Right cardiac atrium (tissue), 5 donors: ENCODE measurements at regions of chr1 and their contacts with region 1.

Region 1: DNA sequence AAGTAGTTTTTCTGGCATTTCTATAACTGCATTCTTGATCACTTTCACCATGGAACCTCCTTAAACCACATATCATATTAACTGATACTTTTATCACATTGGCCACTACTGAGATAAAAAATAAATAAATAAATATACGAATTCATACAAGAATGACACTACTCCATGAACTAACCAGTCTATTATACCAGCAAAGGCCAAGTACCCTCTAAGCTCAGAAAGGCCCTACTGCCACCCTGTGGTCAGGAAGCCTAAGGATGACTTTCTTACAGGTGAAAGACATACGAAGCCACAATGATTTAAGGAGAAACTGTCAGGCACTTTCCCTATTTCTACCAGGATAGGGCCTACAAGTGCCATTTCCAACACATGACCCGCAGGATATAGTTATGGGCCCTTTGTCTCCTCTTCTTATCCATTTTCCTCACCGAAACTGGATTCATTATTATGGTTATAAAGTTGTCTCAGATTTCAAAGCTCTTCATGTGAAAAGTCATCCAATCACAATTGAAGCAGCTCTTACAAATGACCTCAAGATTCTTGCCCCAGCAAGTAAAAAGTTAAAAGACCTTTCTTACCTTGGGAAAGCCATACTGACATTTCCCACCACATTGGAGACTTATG is 23.9 kb downstream of the DNAJC8 start:
- DNase-seq: peak; percentile 23 to 71 (median 57)
- ATAC-seq: peak; percentile 83 to 87
- H3K4me3 ChIP-seq: no peak overlapping the region
- H3K27ac ChIP-seq: no peak overlapping the region
- H3K4me1 ChIP-seq: no peaks in the 10 kb centered on the region
- H3K27me3 ChIP-seq: no peaks in the 10 kb centered on the region

Region 2: GRCh38 chr1:28045777-28046176 is 163.2 kb before region 1 on chr1:
- intact Hi-C with region 1: no loop called
- DNase-seq: no peak
- ATAC-seq: no peak
- H3K4me3 ChIP-seq: no peak overlapping the region
- H3K27ac ChIP-seq: no peak overlapping the region
- H3K4me1 ChIP-seq: no peaks in the 10 kb centered on the region
- H3K27me3 ChIP-seq: no peaks in the 10 kb centered on the region

Region 3: DNA sequence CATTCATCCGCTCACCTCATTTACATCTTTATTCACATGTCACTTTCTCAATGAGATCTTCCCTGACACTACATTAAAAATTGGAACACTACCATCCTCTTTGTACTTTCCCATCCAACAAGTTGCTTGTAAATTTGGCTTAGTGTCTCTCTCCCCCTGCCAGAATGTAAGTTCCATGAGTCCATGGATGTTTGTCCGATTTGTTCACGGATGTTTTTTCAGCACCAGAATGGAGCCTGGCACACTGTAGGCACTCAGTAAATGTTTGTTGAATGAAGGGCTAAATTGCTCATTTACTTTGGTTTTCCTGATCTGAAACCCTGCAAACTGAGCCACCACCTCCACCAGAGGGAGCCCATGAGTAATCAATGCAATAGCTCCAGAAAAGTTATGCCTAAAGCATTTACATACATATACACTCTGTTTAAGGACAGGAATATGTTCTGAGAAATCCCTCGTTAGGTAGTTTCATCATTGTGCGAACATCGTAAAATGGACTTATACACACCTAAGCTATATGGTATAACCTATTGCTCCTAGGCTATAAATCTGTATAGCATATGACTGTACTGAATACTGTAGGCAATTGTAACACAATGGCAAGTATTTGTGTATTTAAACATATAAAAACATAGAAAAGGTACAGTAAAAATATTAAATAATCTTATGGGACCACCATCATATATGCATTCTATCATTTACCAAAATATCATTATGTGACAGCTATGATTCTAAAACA is 117.7 kb before region 1 on chr1:
- intact Hi-C with region 1: loop called in 2 of 4 experiments (anchors 5 kb)
- DNase-seq: peak; percentile 61 to 88 (median 66)
- ATAC-seq: no peak
- H3K4me3 ChIP-seq: no peak overlapping the region
- H3K27ac ChIP-seq: no peak overlapping the region
- H3K4me1 ChIP-seq: peaks cover 5% of the 10 kb centered on the region
- H3K27me3 ChIP-seq: no peaks in the 10 kb centered on the region